ENCODE measurements at regions of chr9 and their contacts with region 1.

Region 1: GRCh38 chr9:124708633-124709291 is 62.3 kb downstream of the NR6A1 start:
- DNase-seq: no peak
- H3K4me3 Mint-ChIP-seq: no peak overlapping the region
- H3K27ac Mint-ChIP-seq: no peak overlapping the region
- H3K4me1 Mint-ChIP-seq: no peaks in the 10 kb centered on the region
- H3K27me3 Mint-ChIP-seq: peaks cover 15% of the 10 kb centered on the region

Region 2: GRCh38 chr9:124551472-124552272 is 157.1 kb before region 1 on chr9:
- intact Hi-C with region 1: loop called (anchors 1 kb)
- DNase-seq: peak; percentile 17
- H3K4me3 Mint-ChIP-seq: no peak overlapping the region
- H3K27ac Mint-ChIP-seq: no peak overlapping the region
- H3K4me1 Mint-ChIP-seq: peaks cover 17% of the 10 kb centered on the region
- H3K27me3 Mint-ChIP-seq: no peaks in the 10 kb centered on the region

Region 3: GRCh38 chr9:124735121-124735520 is 26.4 kb after region 1 on chr9:
- intact Hi-C with region 1: loop called (anchors 1 kb)
- DNase-seq: no peak
- H3K4me3 Mint-ChIP-seq: no peak overlapping the region
- H3K27ac Mint-ChIP-seq: peak overlapping the region; percentile 61
- H3K4me1 Mint-ChIP-seq: peaks cover 25% of the 10 kb centered on the region
- H3K27me3 Mint-ChIP-seq: peaks cover 2% of the 10 kb centered on the region

Region 4: DNA sequence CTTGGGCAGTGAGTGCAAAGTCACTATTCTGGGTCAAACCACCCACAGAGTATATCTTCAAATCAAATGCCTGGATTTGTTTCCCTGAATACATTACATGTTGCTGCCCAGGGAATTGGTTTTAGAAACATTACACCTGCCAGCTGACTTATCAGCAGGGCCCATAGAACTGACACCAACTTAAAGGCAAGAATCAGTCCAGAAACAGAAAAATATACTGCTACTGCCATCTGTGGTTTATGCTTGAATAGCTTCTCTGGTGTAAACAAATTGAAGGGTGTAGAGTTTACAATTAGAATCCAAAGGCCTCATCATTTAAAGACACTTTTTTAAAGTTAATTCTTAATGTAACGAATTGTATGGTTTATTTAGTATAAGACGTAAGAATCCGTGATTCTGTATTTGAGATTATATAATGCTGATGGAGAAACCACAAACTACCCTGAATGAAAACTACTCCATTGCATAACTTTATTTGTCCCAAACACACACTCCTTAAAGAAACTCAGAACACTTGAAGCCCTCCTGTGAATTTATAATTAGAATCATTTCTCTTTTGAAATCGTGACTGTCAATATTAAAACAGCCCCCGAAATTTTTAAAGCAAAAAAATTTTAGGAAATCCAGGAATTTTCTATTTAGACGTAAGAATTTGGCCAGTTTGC is 56.1 kb after region 1 on chr9:
- intact Hi-C with region 1: loop called (anchors 5 kb)
- DNase-seq: no peak
- H3K4me3 Mint-ChIP-seq: no peak overlapping the region
- H3K27ac Mint-ChIP-seq: no peak overlapping the region
- H3K4me1 Mint-ChIP-seq: peaks cover 14% of the 10 kb centered on the region
- H3K27me3 Mint-ChIP-seq: peaks cover 85% of the 10 kb centered on the region

Region 5: DNA sequence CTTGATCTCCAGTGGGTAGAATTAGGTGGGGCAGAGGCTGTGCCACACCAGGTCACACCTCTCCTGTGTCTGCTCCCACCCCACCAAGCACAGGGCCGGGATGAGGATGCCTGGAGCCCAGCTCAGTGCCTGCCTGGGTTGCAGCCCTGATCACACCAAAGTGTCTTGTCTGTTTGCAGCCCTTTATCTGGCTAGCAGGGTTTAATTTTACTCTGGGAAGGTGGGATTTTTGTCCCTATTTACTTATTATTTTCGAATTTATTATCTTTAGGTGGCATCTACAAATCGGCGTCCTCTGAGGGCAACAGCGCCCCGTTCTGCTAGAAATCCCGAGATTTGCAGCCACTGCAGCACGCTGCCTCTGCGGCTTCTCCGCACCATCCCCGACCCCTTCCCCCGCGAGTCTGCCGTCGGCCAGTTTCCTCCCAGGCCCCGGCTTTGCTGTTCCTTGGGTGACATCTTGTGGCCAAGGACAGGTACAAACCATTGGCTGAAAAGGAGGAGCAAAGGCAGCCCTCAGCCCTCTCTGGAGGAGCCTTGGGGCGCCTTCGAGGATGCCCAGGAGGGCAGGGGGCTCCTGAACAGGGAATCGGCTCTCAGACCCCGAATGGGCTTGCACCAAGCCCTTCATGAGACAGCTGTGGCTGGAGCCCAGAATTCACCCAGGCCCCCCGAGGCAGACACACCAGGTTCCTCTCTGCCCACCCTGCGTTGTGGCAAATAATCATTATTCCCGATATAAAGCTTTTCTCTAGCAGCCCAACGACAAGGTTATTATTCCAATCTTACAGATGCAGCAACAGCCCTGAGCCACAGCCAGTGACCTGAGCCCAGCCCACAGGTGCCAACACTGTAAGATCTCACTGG is 665.9 kb after region 1 on chr9:
- intact Hi-C with region 1: loop called (anchors 5 kb)
- DNase-seq: peak; percentile 62
- H3K4me3 Mint-ChIP-seq: peak overlapping the region; percentile 45
- H3K27ac Mint-ChIP-seq: no peak overlapping the region
- H3K4me1 Mint-ChIP-seq: no peaks in the 10 kb centered on the region
- H3K27me3 Mint-ChIP-seq: peaks cover 6% of the 10 kb centered on the region

Region 6: GRCh38 chr9:126070058-126070655 is 1361.4 kb after region 1 on chr9:
- intact Hi-C with region 1: no loop called
- DNase-seq: no peak
- H3K4me3 Mint-ChIP-seq: no peak overlapping the region
- H3K27ac Mint-ChIP-seq: no peak overlapping the region
- H3K4me1 Mint-ChIP-seq: no peaks in the 10 kb centered on the region
- H3K27me3 Mint-ChIP-seq: peaks cover 5% of the 10 kb centered on the region